ENCODE measurements at regions of chr17 and their contacts with region 1.

Region 1: DNA sequence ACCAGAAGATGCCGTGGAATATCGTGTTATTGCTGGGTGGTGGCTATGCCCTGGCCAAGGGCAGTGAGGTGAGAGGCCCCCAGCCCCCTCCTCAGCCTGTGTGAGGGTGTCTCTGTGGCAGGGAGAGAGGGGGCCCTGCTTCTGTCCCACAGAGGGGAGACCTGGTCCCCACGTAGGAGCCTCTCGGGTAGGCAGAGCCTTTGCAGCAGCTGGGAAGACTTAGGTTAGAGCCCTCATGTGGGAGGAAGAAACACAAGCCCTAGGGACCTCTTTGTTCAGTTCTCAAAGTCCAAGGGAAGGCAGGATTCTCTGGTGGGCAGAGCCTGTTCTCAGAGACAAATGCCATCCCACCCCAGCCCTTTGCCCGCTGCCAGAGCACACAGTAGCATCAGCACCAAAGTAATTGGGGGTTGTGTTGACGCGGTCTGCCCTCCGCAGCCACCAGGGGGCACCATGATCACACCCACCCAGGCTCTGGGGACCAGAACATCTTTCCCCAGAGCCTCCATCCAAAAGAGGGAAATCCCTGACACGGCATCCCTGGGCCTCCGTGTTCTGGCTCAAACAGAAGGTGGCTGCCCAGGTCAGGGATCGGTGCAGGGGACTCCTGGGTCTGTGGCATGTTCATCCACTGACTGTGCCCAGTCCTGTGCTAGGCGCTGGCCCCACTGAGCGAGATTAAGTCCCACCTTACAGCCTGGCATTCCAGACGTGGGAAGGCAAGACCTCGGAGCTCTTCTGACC is 11.5 kb upstream of the FOXN1 start:
- DNase-seq: peak; percentile 51 to 97 (median 82)

Region 2: GRCh38 chr17:27975146-27976011 is 519.2 kb before region 1 on chr17:
- intact Hi-C with region 1: no loop called
- DNase-seq: peak in 8 of 10 donors; percentile 32 to 93 (median 54)

Region 3: DNA sequence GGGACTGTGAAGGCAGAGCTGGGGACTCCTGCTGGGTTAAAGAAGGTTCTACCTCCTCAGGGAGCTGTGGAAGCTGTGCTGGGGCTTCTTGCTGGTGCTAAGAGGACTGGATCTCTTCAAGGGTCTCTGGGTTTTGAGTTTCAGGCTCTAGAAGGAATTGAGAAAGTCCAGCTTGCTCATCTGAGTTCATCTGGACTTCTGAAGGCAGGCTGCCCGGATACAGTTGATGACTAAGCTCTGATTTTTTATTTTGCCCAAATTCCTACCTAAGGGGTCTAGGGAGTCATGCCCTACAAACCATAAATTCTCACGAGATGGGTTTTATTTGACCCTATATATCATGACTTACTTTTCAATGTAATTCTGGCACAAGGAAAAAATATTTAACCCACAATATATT is 222.5 kb before region 1 on chr17:
- intact Hi-C with region 1: no loop called
- DNase-seq: no peak

Region 4: DNA sequence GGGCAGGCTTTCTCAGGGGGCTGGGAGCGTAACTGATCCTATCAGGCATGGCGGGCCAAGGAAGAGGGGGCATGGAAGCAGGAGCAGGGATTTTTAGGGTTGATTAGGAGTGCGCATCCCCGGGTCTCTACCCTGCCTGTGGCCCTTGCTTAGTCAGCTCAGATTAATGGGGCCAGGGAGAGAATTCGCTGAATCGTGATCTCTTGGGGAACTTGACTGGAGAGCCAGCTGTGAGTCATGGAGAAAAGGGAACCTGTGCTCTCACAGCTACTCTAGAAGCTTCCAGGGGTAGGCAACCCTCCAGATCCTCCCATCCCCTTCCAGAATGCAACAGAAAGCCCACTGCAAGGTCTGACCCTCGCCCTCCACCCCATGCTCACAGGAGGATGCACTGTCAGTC is 15.2 kb after region 1 on chr17:
- intact Hi-C with region 1: no loop called
- DNase-seq: peak in 2 of 10 donors; percentile 18 to 66

Region 5: GRCh38 chr17:28540231-28540630 is 45.6 kb after region 1 on chr17:
- intact Hi-C with region 1: loop called (anchors 1 kb)
- DNase-seq: peak in 2 of 10 donors; percentile 55 to 62

Region 6: GRCh38 chr17:28552246-28552999 is 57.8 kb after region 1 on chr17 and contains the start of gene UNC119:
- intact Hi-C with region 1: no loop called
- DNase-seq: peak; percentile 49 to 96 (median 71)

Region 7: GRCh38 chr17:28612936-28613872 is 118.6 kb after region 1 on chr17:
- intact Hi-C with region 1: loop called (anchors 2 kb)
- DNase-seq: peak in 3 of 10 donors; percentile 45 to 47 (median 45)